Posterior vena cava (tissue), 2 donors: ENCODE measurements at regions of chr15 and their contacts with region 1.

Region 1: GRCh38 chr15:57611938-57612337 is 20.2 kb downstream of the MYZAP start:
- DNase-seq: no peak

Region 2: DNA sequence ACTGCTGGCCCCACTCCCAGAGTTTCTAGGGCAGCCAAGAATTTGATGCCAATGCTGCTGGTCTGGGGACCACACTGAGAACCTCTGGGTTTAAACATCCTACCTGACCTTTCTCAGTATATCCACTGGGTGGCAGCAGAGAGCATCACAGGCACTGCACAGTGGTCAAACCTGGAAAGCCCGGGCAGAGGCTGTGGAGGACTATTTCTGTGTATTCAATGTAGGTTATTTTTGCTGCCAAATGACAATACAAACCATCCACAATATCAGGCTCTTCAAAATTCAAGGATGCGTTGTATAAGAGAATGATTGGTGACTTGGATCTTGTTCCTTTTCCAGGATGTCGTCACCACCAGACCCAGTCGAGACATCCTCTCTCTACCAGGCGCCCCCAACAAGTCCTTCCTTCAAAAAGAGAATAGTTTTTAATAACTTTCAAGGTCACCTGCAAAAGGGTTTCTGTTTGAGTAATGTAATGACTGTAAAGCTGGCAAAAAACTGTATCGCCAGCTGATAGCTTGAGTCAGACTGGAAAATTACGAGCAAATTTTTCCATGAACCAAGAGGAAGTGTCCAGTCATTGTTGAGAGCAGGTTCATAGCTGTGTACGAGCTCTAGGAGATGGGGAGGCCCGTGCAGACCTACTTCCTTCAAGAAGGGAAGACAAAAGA is 50.8 kb before region 1 on chr15:
- intact Hi-C with region 1: loop called in 1 of 2 experiments (anchors 10 kb)
- DNase-seq: no peak